ENCODE measurements at regions of chr1 and their contacts with region 1.

Region 1: DNA sequence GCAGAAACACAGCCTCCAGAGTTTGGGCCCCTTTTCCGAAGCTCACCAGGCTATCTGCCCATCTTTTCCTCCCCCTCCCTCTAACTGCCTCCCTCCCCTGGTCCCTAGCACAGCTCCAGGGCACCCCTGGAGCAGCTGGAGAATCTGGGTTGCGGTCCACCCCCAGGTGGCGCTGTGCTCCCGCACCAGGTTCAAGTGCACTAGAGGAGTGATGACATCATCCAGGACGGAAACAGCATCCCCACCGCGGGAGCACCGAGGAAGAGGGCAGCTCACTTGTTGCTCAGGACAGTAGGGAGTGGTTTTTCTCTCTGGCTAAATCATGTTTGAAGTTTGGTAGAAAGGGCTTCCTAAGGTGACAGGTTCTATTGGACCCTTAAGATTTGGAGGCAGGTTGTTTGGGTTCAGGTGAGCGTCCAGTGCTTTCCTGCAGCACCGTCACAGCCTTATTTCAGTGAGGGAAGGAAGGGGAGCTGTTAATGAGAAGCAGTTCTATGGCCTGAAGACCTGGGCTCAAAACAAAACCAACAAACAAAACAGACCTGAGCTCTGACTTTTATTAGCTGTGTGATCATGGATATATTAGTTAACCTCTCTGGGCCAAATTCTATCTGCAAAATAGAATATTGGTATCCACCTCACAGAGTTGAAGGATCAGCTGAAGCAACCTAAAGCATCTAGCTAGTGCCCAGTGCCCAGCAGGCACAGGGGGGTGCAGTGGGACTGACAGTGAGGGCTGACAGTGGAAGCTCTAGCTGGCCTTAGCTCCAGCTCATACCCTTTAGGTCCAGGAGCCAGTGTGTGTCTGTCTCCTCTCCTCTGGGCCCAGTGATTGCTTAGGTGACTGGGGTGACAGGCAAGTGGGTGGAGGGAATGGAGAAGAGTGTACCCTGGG is 7.5 kb downstream of the SHISA4 start:
- DNase-seq: peak; percentile 86 to 98
- H3K4me3 ChIP-seq: no peak overlapping the region
- H3K27ac ChIP-seq: no peak overlapping the region
- H3K4me1 ChIP-seq: peaks cover 6 to 21% (median 16%) of the 10 kb centered on the region in 4 experiments
- H3K27me3 ChIP-seq: no peaks in the 10 kb centered on the region
- CTCF ChIP-seq: peak; percentile 95 to 98 (median 96)
- EP300 ChIP-seq: peak in 1 of 2 experiments; percentile 59; a peak in 1 of 3 replicates
- POLR2A ChIP-seq: no peak
- RAD21 ChIP-seq: peak; percentile 98 to 99

Region 2: GRCh38 chr1:201766131-201766866 is 129.9 kb before region 1 on chr1:
- CTCF ChIA-PET with region 1: no interaction called
- POLR2A ChIA-PET with region 1: no interaction called
- DNase-seq: no peak
- H3K4me3 ChIP-seq: no peak overlapping the region
- H3K27ac ChIP-seq: no peak overlapping the region
- H3K4me1 ChIP-seq: peaks cover 0 to 5% (median 0%) of the 10 kb centered on the region in 4 experiments; a peak in 3 of 7 replicates
- H3K27me3 ChIP-seq: no peaks in the 10 kb centered on the region
- CTCF ChIP-seq: no peak
- EP300 ChIP-seq: no peak
- POLR2A ChIP-seq: no peak
- RAD21 ChIP-seq: no peak

Region 3: GRCh38 chr1:201885531-201886075 is 10.6 kb before region 1 on chr1:
- CTCF ChIA-PET with region 1: interaction called, 244 read pairs
- POLR2A ChIA-PET with region 1: interaction called, 117 read pairs
- DNase-seq: no peak
- H3K4me3 ChIP-seq: no peak overlapping the region
- H3K27ac ChIP-seq: no peak overlapping the region
- H3K4me1 ChIP-seq: peaks cover 4 to 13% (median 7%) of the 10 kb centered on the region in 4 experiments
- H3K27me3 ChIP-seq: peaks cover 0 to 10% (median 6%) of the 10 kb centered on the region in 4 experiments; a peak in 4 of 7 replicates
- CTCF ChIP-seq: no peak
- EP300 ChIP-seq: no peak
- POLR2A ChIP-seq: no peak
- RAD21 ChIP-seq: no peak

Region 4: GRCh38 chr1:201937624-201938213 is 41.6 kb after region 1 on chr1:
- CTCF ChIA-PET with region 1: interaction called, 145 read pairs
- POLR2A ChIA-PET with region 1: interaction called, 15 read pairs
- DNase-seq: no peak
- H3K4me3 ChIP-seq: no peak overlapping the region
- H3K27ac ChIP-seq: no peak overlapping the region
- H3K4me1 ChIP-seq: peaks cover 4 to 7% (median 4%) of the 10 kb centered on the region in 4 experiments; a peak in 5 of 7 replicates
- H3K27me3 ChIP-seq: no peaks in the 10 kb centered on the region
- CTCF ChIP-seq: no peak
- EP300 ChIP-seq: no peak
- POLR2A ChIP-seq: no peak
- RAD21 ChIP-seq: no peak

Region 5: DNA sequence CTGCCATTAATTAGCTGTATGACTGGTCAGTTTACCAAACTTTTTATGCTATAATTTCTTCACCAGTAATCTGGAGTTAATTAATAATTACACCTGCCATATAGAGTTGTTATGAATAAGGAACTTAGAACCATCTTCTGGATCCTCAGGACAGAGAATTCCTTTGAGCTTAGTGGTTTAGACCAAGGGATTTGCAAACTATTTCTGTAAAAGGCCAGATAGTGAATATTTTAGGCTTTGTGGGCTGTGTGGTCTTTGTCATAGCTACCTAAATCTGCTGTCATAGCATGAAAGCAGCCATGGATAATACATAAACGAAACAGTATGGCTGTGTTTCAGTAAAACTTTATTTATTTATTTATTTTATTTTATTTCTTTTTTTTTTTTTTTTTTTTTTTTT is 68.1 kb after region 1 on chr1:
- CTCF ChIA-PET with region 1: interaction called, 85 read pairs
- POLR2A ChIA-PET with region 1: interaction called, 4 read pairs
- DNase-seq: no peak
- H3K4me3 ChIP-seq: no peak overlapping the region
- H3K27ac ChIP-seq: no peak overlapping the region
- H3K4me1 ChIP-seq: no peaks in the 10 kb centered on the region
- H3K27me3 ChIP-seq: no peaks in the 10 kb centered on the region
- CTCF ChIP-seq: no peak
- EP300 ChIP-seq: no peak
- POLR2A ChIP-seq: no peak
- RAD21 ChIP-seq: no peak

Region 6: GRCh38 chr1:201999625-202000238 is 103.6 kb after region 1 on chr1:
- CTCF ChIA-PET with region 1: interaction called, 54 read pairs
- POLR2A ChIA-PET with region 1: no interaction called
- DNase-seq: no peak
- H3K4me3 ChIP-seq: no peak overlapping the region
- H3K27ac ChIP-seq: no peak overlapping the region
- H3K4me1 ChIP-seq: no peaks in the 10 kb centered on the region
- H3K27me3 ChIP-seq: no peaks in the 10 kb centered on the region
- CTCF ChIP-seq: peak; percentile 49 to 93 (median 91)
- EP300 ChIP-seq: no peak
- POLR2A ChIP-seq: peak in 1 of 2 experiments; percentile 60; a peak in 2 of 3 replicates
- RAD21 ChIP-seq: peak; percentile 79 to 83

Measured in H1 (cell line).